ENCODE measurements at regions of chr14 and their contacts with region 1.

Region 1: DNA sequence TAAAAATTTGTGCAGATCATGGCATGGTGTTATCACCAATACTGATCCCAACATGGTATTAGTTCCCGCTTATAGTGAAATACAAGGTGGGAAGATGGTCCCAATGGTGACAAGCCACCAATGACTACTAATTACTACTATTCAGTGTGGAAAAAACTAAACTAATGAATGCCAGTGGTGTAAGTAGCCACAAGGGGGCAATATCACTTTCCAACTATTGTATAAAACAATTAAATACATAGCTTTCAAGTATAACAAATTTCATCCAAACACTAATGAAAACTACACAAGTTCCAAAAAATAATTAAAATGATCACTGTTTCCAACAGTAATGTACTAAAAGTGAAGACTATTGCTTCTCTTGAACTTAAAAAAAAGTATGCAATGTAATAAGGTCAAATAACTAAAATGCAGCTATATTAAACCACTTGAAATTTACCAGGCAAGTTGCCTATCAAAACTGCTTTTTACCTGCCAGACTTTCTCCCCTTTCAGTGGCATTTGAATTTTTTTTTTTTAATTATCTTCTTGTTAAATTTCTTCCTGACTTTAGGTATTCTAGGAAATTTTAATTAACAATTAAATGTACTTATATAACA is 58.0 kb downstream of the PAPLN start:
- DNase-seq: no peak
- H3K4me3 Mint-ChIP-seq: no peak overlapping the region
- H3K27ac Mint-ChIP-seq: no peak overlapping the region
- H3K4me1 Mint-ChIP-seq: peaks cover 22% of the 10 kb centered on the region
- H3K27me3 Mint-ChIP-seq: no peaks in the 10 kb centered on the region

Region 2: GRCh38 chr14:73254247-73255004 is 40.9 kb before region 1 on chr14:
- CTCF ChIA-PET with region 1: no interaction called
- POLR2A ChIA-PET with region 1: no interaction called
- DNase-seq: no peak
- H3K4me3 Mint-ChIP-seq: no peak overlapping the region
- H3K27ac Mint-ChIP-seq: no peak overlapping the region
- H3K4me1 Mint-ChIP-seq: peaks cover 8% of the 10 kb centered on the region
- H3K27me3 Mint-ChIP-seq: peaks cover 4% of the 10 kb centered on the region

Region 3: GRCh38 chr14:73272393-73272792 is 22.9 kb before region 1 on chr14:
- CTCF ChIA-PET with region 1: interaction called, 21 read pairs
- POLR2A ChIA-PET with region 1: no interaction called
- DNase-seq: no peak
- H3K4me3 Mint-ChIP-seq: no peak overlapping the region
- H3K27ac Mint-ChIP-seq: no peak overlapping the region
- H3K4me1 Mint-ChIP-seq: peaks cover 6% of the 10 kb centered on the region
- H3K27me3 Mint-ChIP-seq: peaks cover 11% of the 10 kb centered on the region

Region 4: GRCh38 chr14:73307261-73307660 is 12.0 kb after region 1 on chr14:
- CTCF ChIA-PET with region 1: interaction called, 11 read pairs
- POLR2A ChIA-PET with region 1: interaction called, 3 read pairs
- DNase-seq: no peak
- H3K4me3 Mint-ChIP-seq: no peak overlapping the region
- H3K27ac Mint-ChIP-seq: no peak overlapping the region
- H3K4me1 Mint-ChIP-seq: peaks cover 10% of the 10 kb centered on the region
- H3K27me3 Mint-ChIP-seq: no peaks in the 10 kb centered on the region

Region 5: GRCh38 chr14:73381380-73382013 is 86.2 kb after region 1 on chr14:
- CTCF ChIA-PET with region 1: no interaction called
- POLR2A ChIA-PET with region 1: no interaction called
- DNase-seq: no peak
- H3K4me3 Mint-ChIP-seq: no peak overlapping the region
- H3K27ac Mint-ChIP-seq: no peak overlapping the region
- H3K4me1 Mint-ChIP-seq: no peaks in the 10 kb centered on the region
- H3K27me3 Mint-ChIP-seq: no peaks in the 10 kb centered on the region

Region 6: DNA sequence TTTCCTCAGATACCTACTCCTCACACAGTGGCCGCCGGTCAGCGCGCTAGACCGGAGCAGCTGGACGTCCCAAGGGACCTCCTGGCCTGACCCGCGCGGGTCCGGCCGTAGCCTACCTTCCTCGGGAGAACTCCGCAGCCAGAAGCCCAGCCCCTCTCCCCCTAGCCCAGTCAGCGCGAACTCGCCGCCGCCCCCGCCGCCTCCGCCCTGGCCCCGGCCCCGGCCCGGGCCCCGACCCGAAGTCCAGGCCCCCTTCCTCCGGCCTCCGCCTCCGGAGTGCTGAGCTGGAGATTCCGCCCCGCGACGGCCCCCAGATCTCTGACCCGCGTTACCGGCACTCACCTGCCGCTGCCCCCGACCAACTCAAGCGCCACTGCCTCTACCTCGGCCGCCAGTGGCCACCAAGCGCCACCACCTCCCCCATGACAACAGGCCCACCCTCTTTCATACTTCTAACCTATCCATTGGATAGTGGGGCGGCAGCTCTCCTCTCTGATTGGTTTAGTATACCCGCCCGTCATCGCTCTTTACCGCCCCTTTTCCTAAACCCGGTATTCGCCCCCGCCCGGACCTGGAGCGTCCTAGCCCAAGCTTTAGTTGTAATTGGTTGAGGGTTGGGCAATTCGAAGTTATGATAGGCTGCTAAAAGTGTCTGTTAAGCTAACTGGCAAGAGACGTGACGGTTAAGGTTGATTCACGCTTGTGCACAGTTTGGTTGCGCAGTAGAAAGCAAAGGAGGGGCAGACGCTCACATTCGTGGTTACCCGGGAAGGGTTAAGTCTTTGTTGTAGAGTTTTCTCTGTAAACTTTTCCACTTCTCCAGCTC is 163.1 kb after region 1 on chr14 and contains the start of gene NUMB:
- CTCF ChIA-PET with region 1: interaction called, 21 read pairs
- POLR2A ChIA-PET with region 1: interaction called, 3 read pairs
- DNase-seq: peak; percentile 98
- H3K4me3 Mint-ChIP-seq: peak within 1 kb of the TSS; percentile 91
- H3K27ac Mint-ChIP-seq: peak within 1 kb of the TSS; percentile 81
- H3K4me1 Mint-ChIP-seq: peaks cover 43% of the 10 kb centered on the region
- H3K27me3 Mint-ChIP-seq: no peaks in the 10 kb centered on the region
- total RNA-seq, gene NUMB: 44.5 to 46.4 TPM

Region 7: DNA sequence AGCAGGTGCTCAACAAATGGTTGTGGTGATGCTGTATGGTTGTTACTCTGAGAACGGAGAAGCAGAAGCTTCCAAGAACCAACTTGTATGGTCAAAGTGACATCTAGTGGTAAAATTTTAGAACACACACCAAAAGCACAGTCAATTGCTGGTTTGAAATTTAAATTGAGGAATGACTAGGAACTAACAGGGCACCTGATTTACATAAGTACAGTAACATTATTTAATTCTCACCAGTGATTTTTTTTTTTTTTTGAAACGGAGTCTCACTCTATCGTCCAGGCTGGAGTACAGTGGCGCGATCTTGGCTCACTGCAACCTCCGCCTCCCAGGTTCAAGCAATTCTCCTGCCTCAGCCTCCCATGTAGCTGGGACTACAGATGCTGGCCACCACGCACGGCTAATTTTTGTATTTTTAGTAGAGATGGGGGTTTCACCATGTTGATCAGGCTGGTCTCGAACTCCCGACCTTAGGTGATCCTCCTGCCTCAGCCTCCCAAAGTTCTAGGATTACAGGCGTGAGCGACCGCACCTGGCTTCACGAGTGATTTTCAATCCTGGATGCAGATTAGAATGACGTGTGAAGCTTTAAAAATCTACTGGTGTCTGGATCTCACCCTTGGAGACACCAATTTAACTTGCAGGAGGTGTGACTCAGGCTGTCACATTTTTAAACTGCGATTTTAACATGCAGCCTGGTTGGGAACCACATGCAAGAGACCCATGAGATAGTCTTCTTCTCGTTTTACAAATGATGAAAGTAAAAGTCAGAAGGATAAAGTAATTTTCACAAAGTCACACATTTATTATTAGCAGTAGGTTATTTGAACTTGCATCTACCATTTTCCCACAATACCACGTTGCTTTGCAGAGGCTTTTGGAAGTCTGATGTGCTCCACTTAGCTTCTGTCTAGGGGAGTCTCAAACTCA is 177.2 kb after region 1 on chr14:
- CTCF ChIA-PET with region 1: interaction called, 54 read pairs
- POLR2A ChIA-PET with region 1: interaction called, 4 read pairs
- DNase-seq: no peak
- H3K4me3 Mint-ChIP-seq: no peak overlapping the region
- H3K27ac Mint-ChIP-seq: no peak overlapping the region
- H3K4me1 Mint-ChIP-seq: peaks cover 12% of the 10 kb centered on the region
- H3K27me3 Mint-ChIP-seq: no peaks in the 10 kb centered on the region